ENCODE measurements at regions of chr10 and their contacts with region 1.

Region 1: GRCh38 chr10:11242443-11243387 is 225.0 kb downstream of the CELF2 start:
- DNase-seq: peak; percentile 32
- H3K4me3 ChIP-seq: no peak overlapping the region
- H3K27ac ChIP-seq: no peak overlapping the region
- H3K4me1 ChIP-seq: peaks cover 25% of the 10 kb centered on the region
- CTCF ChIP-seq: no peak

Region 2: GRCh38 chr10:11165591-11166543 is 76.8 kb before region 1 on chr10:
- CTCF ChIA-PET with region 1: interaction called, 7 read pairs
- POLR2A ChIA-PET with region 1: interaction called, 10 read pairs
- intact Hi-C with region 1: no loop called
- DNase-seq: peak; percentile 77
- H3K4me3 ChIP-seq: peak overlapping the region; percentile 70
- H3K27ac ChIP-seq: no peak overlapping the region
- H3K4me1 ChIP-seq: peaks cover 44% of the 10 kb centered on the region
- CTCF ChIP-seq: peak; percentile 76

Region 3: GRCh38 chr10:11178606-11179515 is 63.9 kb before region 1 on chr10:
- CTCF ChIA-PET with region 1: interaction called, 3 read pairs
- POLR2A ChIA-PET with region 1: interaction called, 3 read pairs
- intact Hi-C with region 1: loop called (anchors 2 kb)
- DNase-seq: peak; percentile 85
- H3K4me3 ChIP-seq: peak overlapping the region; percentile 9
- H3K27ac ChIP-seq: peak overlapping the region; percentile 12
- H3K4me1 ChIP-seq: peaks cover 53% of the 10 kb centered on the region
- CTCF ChIP-seq: no peak

Region 4: GRCh38 chr10:11255796-11256444 is 13.2 kb after region 1 on chr10:
- CTCF ChIA-PET with region 1: interaction called, 4 read pairs
- POLR2A ChIA-PET with region 1: interaction called, 11 read pairs
- intact Hi-C with region 1: no loop called
- DNase-seq: peak; percentile 69
- H3K4me3 ChIP-seq: no peak overlapping the region
- H3K27ac ChIP-seq: no peak overlapping the region
- H3K4me1 ChIP-seq: peaks cover 43% of the 10 kb centered on the region
- CTCF ChIP-seq: no peak

Region 5: DNA sequence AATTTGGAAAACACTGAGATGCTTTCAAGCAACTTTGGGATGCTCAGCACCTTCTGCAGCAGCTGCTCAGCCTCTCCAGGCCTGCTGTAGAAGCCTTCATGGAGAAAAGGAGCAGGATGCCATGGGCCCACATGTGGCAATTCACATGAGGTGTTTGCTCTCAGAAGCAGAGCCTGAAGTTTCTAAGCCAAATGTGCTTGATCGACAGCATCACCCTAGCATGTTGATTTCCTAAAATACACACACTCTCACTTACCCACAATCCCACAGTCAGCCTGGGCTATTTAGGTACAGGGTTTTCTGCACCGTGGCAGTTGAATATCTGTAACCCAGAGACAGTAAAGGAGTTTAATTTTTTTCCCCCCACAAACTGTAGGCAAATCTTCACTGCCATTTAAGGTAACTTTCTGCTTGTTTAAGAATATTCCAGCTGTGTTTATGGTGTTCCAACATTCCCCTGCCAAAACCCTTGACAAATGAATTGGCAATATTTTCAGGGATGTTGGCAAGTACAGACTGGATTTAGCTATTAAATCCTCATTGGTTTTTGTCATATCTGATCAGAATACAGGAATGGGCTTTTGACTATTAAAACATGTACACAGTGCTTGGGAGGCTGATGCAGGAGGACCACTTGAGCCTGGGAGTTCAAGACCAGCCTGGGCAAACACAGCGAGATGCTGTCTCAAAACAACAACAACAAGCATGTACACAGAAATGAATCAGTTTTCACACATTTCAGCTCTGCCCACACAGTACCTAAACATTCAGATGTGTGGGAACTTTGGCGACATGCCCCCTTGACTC is 19.2 kb after region 1 on chr10:
- CTCF ChIA-PET with region 1: interaction called, 3 read pairs
- POLR2A ChIA-PET with region 1: interaction called, 11 read pairs
- intact Hi-C with region 1: no loop called
- DNase-seq: peak; percentile 29
- H3K4me3 ChIP-seq: no peak overlapping the region
- H3K27ac ChIP-seq: no peak overlapping the region
- H3K4me1 ChIP-seq: peaks cover 58% of the 10 kb centered on the region
- CTCF ChIP-seq: no peak

Measured in OCI-LY7 (cell line).